Sigmoid colon (tissue), 7 donors: ENCODE measurements at regions of chr6 and their contacts with region 1.

Region 1: DNA sequence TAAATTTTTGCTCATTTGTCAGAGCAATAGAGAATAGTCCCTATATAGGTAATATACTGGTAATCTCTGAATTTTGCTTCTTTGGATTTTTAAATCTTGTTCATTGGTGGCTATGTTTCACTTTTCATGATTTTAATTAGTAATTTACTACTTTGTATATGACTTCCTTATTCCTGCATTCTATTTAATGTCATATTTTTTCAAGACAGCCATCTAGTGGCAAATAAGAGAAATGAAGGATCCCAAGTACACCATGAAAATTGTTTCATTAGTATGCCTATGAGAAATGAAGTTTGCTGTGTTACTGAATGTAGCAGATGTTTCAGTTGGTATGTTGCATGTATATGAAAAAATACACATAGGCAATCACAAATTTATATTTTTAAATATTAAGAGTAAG is 82.4 kb downstream of the ZNF292 start:
- DNase-seq: no peak
- H3K4me3 ChIP-seq: no peak overlapping the region
- H3K27ac ChIP-seq: no peak overlapping the region
- H3K4me1 ChIP-seq: no peaks in the 10 kb centered on the region
- H3K27me3 ChIP-seq: no peaks in the 10 kb centered on the region
- CTCF ChIP-seq: peak in 3 of 4 experiments; percentile 32 to 59 (median 54)
- EP300 ChIP-seq: no peak
- POLR2A ChIP-seq: no peak

Region 2: DNA sequence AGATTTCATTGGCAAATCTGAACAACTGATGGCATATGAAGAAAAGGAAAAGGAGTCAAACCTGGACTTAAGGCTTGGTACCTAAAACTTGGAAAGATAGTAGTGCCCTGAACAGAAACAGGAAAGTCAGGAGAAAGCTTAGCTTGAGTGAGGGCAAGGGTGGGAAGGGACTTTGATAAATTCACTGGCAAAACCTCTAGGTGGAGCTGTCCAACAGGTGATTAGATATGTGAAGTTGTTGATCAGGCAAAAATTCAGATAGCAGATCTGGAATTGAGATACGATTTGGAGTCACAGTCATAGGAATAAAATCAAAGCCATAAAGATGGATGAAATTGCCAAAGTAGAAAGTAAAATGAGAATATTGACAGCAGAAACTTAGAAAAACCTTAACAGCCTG is 98.6 kb before region 1 on chr6:
- intact Hi-C with region 1: loop called (anchors 1 kb)
- DNase-seq: no peak
- H3K4me3 ChIP-seq: no peak overlapping the region
- H3K27ac ChIP-seq: no peak overlapping the region
- H3K4me1 ChIP-seq: no peaks in the 10 kb centered on the region
- H3K27me3 ChIP-seq: no peaks in the 10 kb centered on the region
- CTCF ChIP-seq: peak; percentile 52 to 72 (median 67)
- EP300 ChIP-seq: no peak
- POLR2A ChIP-seq: no peak

Region 3: DNA sequence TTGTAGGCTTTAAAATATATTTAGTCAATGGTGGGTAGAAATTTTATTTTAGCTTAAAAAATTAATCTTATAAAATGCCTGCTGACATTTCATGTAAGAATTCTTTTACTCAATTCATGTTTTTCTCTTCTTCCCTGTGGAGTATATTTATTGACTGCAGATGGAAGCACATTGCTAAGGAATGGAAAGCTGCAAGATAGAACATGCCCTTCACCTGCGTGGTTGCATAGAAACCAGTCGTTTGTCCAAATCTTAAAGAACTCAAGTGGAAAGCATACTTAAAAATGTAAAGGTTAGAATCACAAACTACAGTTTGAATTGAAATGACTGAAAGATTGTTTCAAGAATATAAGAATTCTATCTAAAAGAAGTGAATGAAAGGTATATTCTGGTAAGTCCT is 137.5 kb after region 1 on chr6:
- intact Hi-C with region 1: no loop called
- DNase-seq: no peak
- H3K4me3 ChIP-seq: no peak overlapping the region
- H3K27ac ChIP-seq: no peak overlapping the region
- H3K4me1 ChIP-seq: no peaks in the 10 kb centered on the region
- H3K27me3 ChIP-seq: no peaks in the 10 kb centered on the region
- CTCF ChIP-seq: no peak
- EP300 ChIP-seq: no peak
- POLR2A ChIP-seq: no peak

Region 4: DNA sequence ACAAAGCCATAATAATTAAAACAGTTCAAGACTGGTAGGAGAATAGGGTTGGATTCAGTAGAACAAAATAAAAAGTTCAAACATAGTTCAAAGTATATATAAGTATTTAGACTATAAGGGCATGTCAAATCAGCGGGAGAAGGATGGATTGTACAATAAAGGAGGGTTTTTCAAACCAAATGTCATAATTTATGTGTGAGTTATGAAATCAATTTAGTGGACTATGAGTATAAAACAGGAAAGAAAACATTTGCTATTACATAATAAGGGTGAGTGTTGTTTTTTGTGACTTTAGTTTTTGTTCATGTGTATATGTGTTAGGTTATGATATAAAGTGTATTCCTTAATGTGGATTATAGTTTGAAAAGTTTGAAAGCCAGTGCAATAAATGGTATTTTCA is 362.8 kb after region 1 on chr6:
- intact Hi-C with region 1: no loop called
- DNase-seq: no peak
- H3K4me3 ChIP-seq: no peak overlapping the region
- H3K27ac ChIP-seq: no peak overlapping the region
- H3K4me1 ChIP-seq: no peaks in the 10 kb centered on the region
- H3K27me3 ChIP-seq: no peaks in the 10 kb centered on the region
- CTCF ChIP-seq: no peak
- EP300 ChIP-seq: no peak
- POLR2A ChIP-seq: no peak